ENCODE measurements at regions of chr7 and their contacts with region 1.

Region 1: GRCh38 chr7:141701489-141702046 is 398 bp downstream of the DENND11 start:
- DNase-seq: peak; percentile 69
- ATAC-seq: peak; percentile 89
- H3K4me3 Mint-ChIP-seq: peak overlapping the region; percentile 85
- H3K27ac Mint-ChIP-seq: peak overlapping the region; percentile 75
- H3K4me1 Mint-ChIP-seq: peaks cover 50% of the 10 kb centered on the region
- H3K27me3 Mint-ChIP-seq: no peaks in the 10 kb centered on the region
- CTCF ChIP-seq: no peak

Region 2: DNA sequence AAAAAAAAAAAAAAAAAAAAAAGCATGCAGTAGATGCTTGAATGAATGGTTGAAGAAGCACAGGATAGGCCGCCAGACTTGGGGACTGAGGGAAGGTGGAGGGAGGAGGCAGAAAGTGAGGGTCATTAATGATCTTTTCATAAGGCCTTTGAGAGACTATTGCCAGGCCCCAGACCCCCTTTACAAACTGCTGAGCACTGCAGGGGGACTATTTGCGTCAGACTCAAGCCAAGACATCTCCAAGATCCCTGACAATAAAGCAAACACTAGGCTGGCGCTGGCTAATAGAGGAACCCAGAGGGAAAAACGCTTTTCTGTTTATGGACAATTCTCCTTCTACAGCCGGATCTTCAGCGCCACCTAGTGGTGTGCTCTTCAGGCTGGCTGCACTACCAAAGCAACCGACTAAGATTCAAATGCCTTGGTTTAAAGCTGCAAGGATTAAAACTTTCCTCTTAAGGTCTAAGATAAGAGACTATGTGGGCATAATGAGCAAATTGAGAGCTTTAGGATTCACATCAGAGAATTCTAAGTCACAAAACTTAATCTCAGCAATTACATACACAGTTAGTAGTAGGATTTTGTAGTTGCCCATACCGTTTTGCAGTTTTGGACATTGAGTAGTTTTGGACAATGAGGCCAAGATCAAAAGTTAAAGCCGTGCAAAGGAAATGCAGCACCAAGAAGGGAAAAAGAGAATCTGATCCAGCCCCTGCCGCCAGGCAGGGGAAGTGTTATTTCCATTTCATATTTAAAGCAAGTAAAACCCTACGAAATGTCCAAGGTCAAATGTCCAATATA is 168.2 kb before region 1 on chr7:
- CTCF ChIA-PET with region 1: no interaction called
- POLR2A ChIA-PET with region 1: no interaction called
- intact Hi-C with region 1: no loop called
- DNase-seq: peak; percentile 29
- ATAC-seq: peak; percentile 45
- H3K4me3 Mint-ChIP-seq: no peak overlapping the region
- H3K27ac Mint-ChIP-seq: no peak overlapping the region
- H3K4me1 Mint-ChIP-seq: no peaks in the 10 kb centered on the region
- H3K27me3 Mint-ChIP-seq: peaks cover 23% of the 10 kb centered on the region
- CTCF ChIP-seq: peak; percentile 54

Region 3: GRCh38 chr7:141675436-141676215 is 25.9 kb before region 1 on chr7:
- CTCF ChIA-PET with region 1: no interaction called
- POLR2A ChIA-PET with region 1: no interaction called
- intact Hi-C with region 1: loop called (anchors 2 kb)
- DNase-seq: no peak
- ATAC-seq: peak; percentile 49
- H3K4me3 Mint-ChIP-seq: no peak overlapping the region
- H3K27ac Mint-ChIP-seq: no peak overlapping the region
- H3K4me1 Mint-ChIP-seq: peaks cover 16% of the 10 kb centered on the region
- H3K27me3 Mint-ChIP-seq: no peaks in the 10 kb centered on the region
- CTCF ChIP-seq: no peak

Region 4: GRCh38 chr7:141685285-141686023 is 16.1 kb before region 1 on chr7:
- CTCF ChIA-PET with region 1: no interaction called
- POLR2A ChIA-PET with region 1: no interaction called
- intact Hi-C with region 1: loop called (anchors 2 kb)
- DNase-seq: no peak
- ATAC-seq: no peak
- H3K4me3 Mint-ChIP-seq: no peak overlapping the region
- H3K27ac Mint-ChIP-seq: no peak overlapping the region
- H3K4me1 Mint-ChIP-seq: no peaks in the 10 kb centered on the region
- H3K27me3 Mint-ChIP-seq: no peaks in the 10 kb centered on the region
- CTCF ChIP-seq: no peak